ENCODE measurements at regions of chr1 and their contacts with region 1.

Region 1: DNA sequence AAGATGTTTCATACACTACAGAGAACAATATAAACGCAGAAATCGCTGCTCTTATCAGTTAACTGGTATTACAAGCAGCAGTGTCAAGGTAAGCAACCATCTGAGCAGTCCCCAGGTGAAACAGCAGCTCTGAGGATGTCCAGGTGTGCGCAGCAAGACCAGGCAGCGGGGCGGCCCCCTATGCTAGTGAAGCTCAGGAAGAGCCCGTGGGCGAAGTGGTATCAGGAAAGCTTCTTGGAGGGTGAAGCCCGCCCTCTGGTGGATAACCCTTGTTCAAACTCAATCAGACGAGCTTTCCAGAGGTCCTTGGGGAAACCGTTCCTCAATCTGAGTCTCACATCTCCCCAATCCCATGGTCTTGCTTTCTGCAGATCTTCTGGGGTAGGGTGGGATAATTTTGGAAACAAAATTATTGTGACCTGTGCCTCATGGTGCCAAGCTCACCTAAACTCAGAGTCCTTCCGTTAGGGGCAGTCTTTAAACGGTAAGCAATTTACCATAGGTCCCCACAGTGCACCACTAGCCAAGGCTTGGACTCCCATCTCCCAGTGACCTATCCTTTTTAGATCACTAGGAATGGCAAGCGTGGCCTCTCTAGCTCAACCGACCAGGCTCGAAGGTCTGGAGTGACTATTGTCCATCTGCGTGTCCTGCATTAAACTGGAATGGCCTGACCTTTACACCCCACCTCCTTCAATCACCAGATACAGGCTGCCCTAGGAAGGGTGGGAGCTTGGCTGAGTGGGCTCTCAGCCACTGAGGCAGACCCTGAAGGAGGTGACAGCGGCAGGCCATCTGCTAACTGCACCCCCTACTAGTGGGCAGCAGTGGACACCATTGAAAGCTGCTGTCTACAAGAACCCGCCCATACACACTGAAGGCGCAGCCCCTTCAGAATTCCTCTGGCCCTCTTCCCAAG is 13.6 kb upstream of the FAM110D start:
- DNase-seq: no peak
- ATAC-seq: peak; percentile 95
- H3K4me3 ChIP-seq: no peak overlapping the region
- H3K27ac ChIP-seq: no peak overlapping the region
- H3K4me1 ChIP-seq: no peaks in the 10 kb centered on the region
- H3K27me3 ChIP-seq: no peaks in the 10 kb centered on the region; a peak in 2 of 4 replicates
- CTCF ChIP-seq: peak; percentile 74 to 82 (median 76)
- EP300 ChIP-seq: no peak
- POLR2A ChIP-seq: no peak
- RAD21 ChIP-seq: peak; percentile 86

Region 2: GRCh38 chr1:25675729-25676476 is 469.4 kb before region 1 on chr1:
- CTCF ChIA-PET with region 1: no interaction called
- POLR2A ChIA-PET with region 1: no interaction called
- RAD21 ChIA-PET with region 1: no interaction called
- SMC1A ChIA-PET with region 1: no interaction called
- in situ Hi-C with region 1: no loop called
- intact Hi-C with region 1: no loop called
- DNase-seq: peak; percentile 93
- ATAC-seq: peak; percentile 98
- H3K4me3 ChIP-seq: no peak overlapping the region
- H3K27ac ChIP-seq: no peak overlapping the region
- H3K4me1 ChIP-seq: peaks cover 21% of the 10 kb centered on the region
- H3K27me3 ChIP-seq: peaks cover 3 to 15% of the 10 kb centered on the region in 2 experiments
- CTCF ChIP-seq: no peak
- EP300 ChIP-seq: peak; percentile 93 to 97
- POLR2A ChIP-seq: no peak
- RAD21 ChIP-seq: no peak

Region 3: GRCh38 chr1:26035959-26036755 is 109.1 kb before region 1 on chr1:
- CTCF ChIA-PET with region 1: interaction called, 35 read pairs
- POLR2A ChIA-PET with region 1: interaction called, 3 read pairs
- RAD21 ChIA-PET with region 1: interaction called, 11 read pairs
- SMC1A ChIA-PET with region 1: interaction called, 8 read pairs
- in situ Hi-C with region 1: no loop called
- intact Hi-C with region 1: loop called (anchors 5 kb)
- DNase-seq: peak; percentile 13
- ATAC-seq: peak; percentile 93
- H3K4me3 ChIP-seq: peak overlapping the region; percentile 86
- H3K27ac ChIP-seq: no peak overlapping the region
- H3K4me1 ChIP-seq: peaks cover 10% of the 10 kb centered on the region; the same call in 1 of the 2 replicates
- H3K27me3 ChIP-seq: peaks cover 0 to 2% of the 10 kb centered on the region in 2 experiments
- CTCF ChIP-seq: peak; percentile 97 to 100 (median 97); a peak in 5 of 6 replicates
- EP300 ChIP-seq: no peak
- POLR2A ChIP-seq: no peak
- RAD21 ChIP-seq: peak; percentile 82

Region 4: DNA sequence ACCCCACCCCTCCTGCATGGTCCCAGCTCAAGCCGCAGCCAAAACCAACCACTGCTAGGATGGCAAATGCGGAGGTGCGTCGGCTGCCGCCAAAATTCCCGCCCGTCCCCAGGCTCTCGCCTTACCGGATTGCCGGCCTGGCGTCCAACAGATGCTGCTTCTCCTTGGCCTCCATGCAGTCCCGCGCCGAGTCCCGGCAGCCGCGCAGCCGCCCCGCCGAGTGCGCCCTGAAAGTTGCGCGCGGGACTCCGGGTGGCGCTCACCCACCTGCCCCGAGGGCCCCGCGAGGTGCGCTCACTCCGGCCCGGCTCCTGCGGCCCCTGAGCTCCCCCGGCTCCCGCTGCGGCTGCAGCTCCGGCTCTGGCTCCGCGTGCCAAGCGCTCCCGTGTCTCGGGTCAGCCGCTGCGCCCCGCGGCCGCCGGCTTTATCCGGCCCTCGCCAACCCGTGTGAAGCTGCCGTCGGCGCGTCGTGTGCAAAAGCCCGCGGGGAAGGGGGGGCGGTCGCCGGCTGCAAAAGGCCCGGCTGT is 99.5 kb before region 1 on chr1 and contains the start of gene SLC30A2:
- CTCF ChIA-PET with region 1: interaction called, 3 read pairs
- POLR2A ChIA-PET with region 1: no interaction called
- RAD21 ChIA-PET with region 1: no interaction called
- SMC1A ChIA-PET with region 1: no interaction called
- in situ Hi-C with region 1: loop called (anchors 5 kb)
- intact Hi-C with region 1: no loop called
- DNase-seq: no peak
- ATAC-seq: no peak
- H3K4me3 ChIP-seq: no peak within 1 kb of the TSS
- H3K27ac ChIP-seq: no peak within 1 kb of the TSS
- H3K4me1 ChIP-seq: no peaks in the 10 kb centered on the region
- H3K27me3 ChIP-seq: peaks cover 13 to 19% of the 10 kb centered on the region in 2 experiments
- CTCF ChIP-seq: no peak
- EP300 ChIP-seq: no peak
- POLR2A ChIP-seq: no peak
- RAD21 ChIP-seq: no peak
- polyA plus RNA-seq, gene SLC30A2: not detected

Region 5: DNA sequence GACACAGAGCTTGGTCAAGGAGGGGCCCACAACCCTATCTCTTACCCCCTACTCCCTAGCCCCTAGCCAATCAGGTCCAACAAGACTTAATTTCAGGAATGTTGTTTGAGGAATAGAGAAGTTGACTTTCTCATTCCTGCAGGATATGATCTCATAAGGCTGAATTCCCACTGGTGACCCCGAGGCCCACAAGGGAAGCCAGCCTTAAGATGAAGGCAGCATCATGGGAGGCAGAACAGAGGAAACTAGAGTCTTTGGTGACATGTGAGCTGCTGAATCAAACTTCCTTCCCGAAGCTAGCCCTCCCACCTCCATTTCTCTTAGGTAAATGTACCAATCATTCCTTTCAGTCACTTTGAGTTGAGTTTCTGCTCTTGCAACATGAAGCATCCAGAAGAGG is 42.8 kb before region 1 on chr1:
- CTCF ChIA-PET with region 1: interaction called, 235 read pairs
- POLR2A ChIA-PET with region 1: interaction called, 3 read pairs
- RAD21 ChIA-PET with region 1: interaction called, 110 read pairs
- SMC1A ChIA-PET with region 1: interaction called, 131 read pairs
- in situ Hi-C with region 1: loop called (anchors 5 kb)
- intact Hi-C with region 1: loop called (anchors 1 kb)
- DNase-seq: no peak
- ATAC-seq: no peak
- H3K4me3 ChIP-seq: no peak overlapping the region
- H3K27ac ChIP-seq: no peak overlapping the region
- H3K4me1 ChIP-seq: no peaks in the 10 kb centered on the region
- H3K27me3 ChIP-seq: peaks cover 0 to 2% of the 10 kb centered on the region in 2 experiments; a peak in 3 of 4 replicates
- CTCF ChIP-seq: no peak
- EP300 ChIP-seq: no peak
- POLR2A ChIP-seq: no peak
- RAD21 ChIP-seq: no peak

Region 6: GRCh38 chr1:26111530-26112406 is 33.5 kb before region 1 on chr1 and contains the start of gene PDIK1L:
- CTCF ChIA-PET with region 1: interaction called, 235 read pairs
- POLR2A ChIA-PET with region 1: no interaction called
- RAD21 ChIA-PET with region 1: interaction called, 22 read pairs
- SMC1A ChIA-PET with region 1: interaction called, 131 read pairs
- in situ Hi-C with region 1: loop called (anchors 5 kb)
- intact Hi-C with region 1: no loop called
- DNase-seq: peak; percentile 73
- ATAC-seq: peak; percentile 86
- H3K4me3 ChIP-seq: peak within 1 kb of the TSS; percentile 89
- H3K27ac ChIP-seq: peak within 1 kb of the TSS; percentile 85
- H3K4me1 ChIP-seq: peaks cover 12% of the 10 kb centered on the region
- H3K27me3 ChIP-seq: no peaks in the 10 kb centered on the region
- CTCF ChIP-seq: no peak
- EP300 ChIP-seq: 0 out of 4 replicates have a peak, but pooled peaks of 1 of the 2 experiments have one; percentile 5
- POLR2A ChIP-seq: peak; percentile 88
- RAD21 ChIP-seq: no peak
- polyA plus RNA-seq, gene PDIK1L: 4.0 to 9.5 TPM

Region 7: DNA sequence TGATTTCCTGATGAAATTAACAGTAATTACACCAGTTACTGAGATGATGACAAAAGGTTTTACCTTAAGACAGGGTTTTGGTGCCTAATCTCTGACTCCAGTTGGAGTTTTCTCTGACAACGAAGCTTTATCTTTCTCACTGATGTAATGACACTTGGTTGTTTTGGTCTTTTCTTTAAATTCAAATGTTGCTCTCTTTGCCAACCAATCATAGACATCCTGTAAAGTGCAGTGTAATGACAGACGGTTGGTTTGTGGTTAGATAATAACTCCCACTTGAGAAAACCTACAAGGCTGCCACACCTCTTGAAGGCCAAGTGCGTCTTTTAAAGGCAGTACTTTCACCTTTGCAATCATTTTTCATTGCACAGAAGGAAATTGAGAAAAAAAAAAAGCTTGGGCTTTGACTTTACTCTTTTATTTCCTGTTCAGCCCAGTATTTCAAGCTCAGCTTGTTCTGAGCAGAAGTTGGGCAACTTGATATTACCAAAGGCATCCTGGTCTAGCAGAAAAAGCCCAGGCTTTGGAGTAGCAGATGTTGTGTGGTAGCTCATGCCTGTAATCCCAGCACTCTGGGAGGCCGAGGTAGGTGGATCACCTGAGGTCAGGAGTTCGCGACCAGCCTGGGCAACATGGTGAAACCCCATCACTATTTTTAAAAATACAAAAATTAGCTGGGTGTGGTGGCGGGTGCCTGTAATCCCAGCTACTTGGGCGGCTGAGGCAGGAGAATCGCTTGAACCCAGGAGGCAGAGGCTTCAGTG is 18.8 kb before region 1 on chr1:
- CTCF ChIA-PET with region 1: interaction called, 92 read pairs
- POLR2A ChIA-PET with region 1: interaction called, 3 read pairs
- RAD21 ChIA-PET with region 1: interaction called, 18 read pairs
- SMC1A ChIA-PET with region 1: interaction called, 21 read pairs
- in situ Hi-C with region 1: no loop called
- intact Hi-C with region 1: no loop called
- DNase-seq: no peak
- ATAC-seq: peak; percentile 97
- H3K4me3 ChIP-seq: no peak overlapping the region
- H3K27ac ChIP-seq: peak overlapping the region; percentile 27; the same call in 1 of the 2 replicates
- H3K4me1 ChIP-seq: peaks cover 4% of the 10 kb centered on the region
- H3K27me3 ChIP-seq: no peaks in the 10 kb centered on the region
- CTCF ChIP-seq: no peak
- EP300 ChIP-seq: no peak
- POLR2A ChIP-seq: no peak
- RAD21 ChIP-seq: no peak

Region 8: GRCh38 chr1:26161415-26162219 is 16.3 kb after region 1 on chr1:
- CTCF ChIA-PET with region 1: interaction called, 24 read pairs
- POLR2A ChIA-PET with region 1: no interaction called
- RAD21 ChIA-PET with region 1: no interaction called
- SMC1A ChIA-PET with region 1: interaction called, 11 read pairs
- in situ Hi-C with region 1: no loop called
- intact Hi-C with region 1: no loop called
- DNase-seq: no peak
- ATAC-seq: peak; percentile 70
- H3K4me3 ChIP-seq: no peak overlapping the region
- H3K27ac ChIP-seq: no peak overlapping the region
- H3K4me1 ChIP-seq: peaks cover 4% of the 10 kb centered on the region
- H3K27me3 ChIP-seq: peaks cover 3 to 22% of the 10 kb centered on the region in 2 experiments
- CTCF ChIP-seq: peak in 1 of 3 experiments; percentile 12; a peak in 2 of 6 replicates
- EP300 ChIP-seq: no peak
- POLR2A ChIP-seq: no peak
- RAD21 ChIP-seq: no peak